ENCODE measurements at regions of chr6 and their contacts with region 1.

Region 1: GRCh38 chr6:143026696-143027449 is 33.8 kb upstream of the AIG1 start:
- DNase-seq: peak; percentile 42 to 60
- ATAC-seq: peak; percentile 64 to 91 (median 78)
- H3K4me3 ChIP-seq: no peak overlapping the region
- H3K27ac ChIP-seq: no peak overlapping the region
- H3K4me1 ChIP-seq: no peaks in the 10 kb centered on the region
- H3K27me3 ChIP-seq: no peaks in the 10 kb centered on the region
- CTCF ChIP-seq: peak; percentile 68

Region 2: GRCh38 chr6:142474531-142475289 is 552.2 kb before region 1 on chr6:
- intact Hi-C with region 1: loop called in 1 of 2 experiments (anchors 10 kb)
- DNase-seq: no peak
- ATAC-seq: peak in 1 of 4 donors; percentile 64
- H3K4me3 ChIP-seq: no peak overlapping the region
- H3K27ac ChIP-seq: no peak overlapping the region
- H3K4me1 ChIP-seq: no peaks in the 10 kb centered on the region
- H3K27me3 ChIP-seq: no peaks in the 10 kb centered on the region
- CTCF ChIP-seq: peak; percentile 89

Region 3: GRCh38 chr6:142952614-142953013 is 74.3 kb before region 1 on chr6:
- intact Hi-C with region 1: loop called in 1 of 2 experiments (anchors 10 kb)
- DNase-seq: no peak
- ATAC-seq: no peak
- H3K4me3 ChIP-seq: no peak overlapping the region
- H3K27ac ChIP-seq: no peak overlapping the region
- H3K4me1 ChIP-seq: no peaks in the 10 kb centered on the region
- H3K27me3 ChIP-seq: no peaks in the 10 kb centered on the region
- CTCF ChIP-seq: no peak

Region 4: GRCh38 chr6:142975365-142975764 is 51.5 kb before region 1 on chr6:
- intact Hi-C with region 1: no loop called
- DNase-seq: no peak
- ATAC-seq: no peak
- H3K4me3 ChIP-seq: no peak overlapping the region
- H3K27ac ChIP-seq: no peak overlapping the region
- H3K4me1 ChIP-seq: no peaks in the 10 kb centered on the region
- H3K27me3 ChIP-seq: no peaks in the 10 kb centered on the region
- CTCF ChIP-seq: no peak

Measured in psoas muscle (tissue), 8 donors.